HEK293T (cell line): ENCODE measurements at regions of chr13 and their contacts with region 1.

Region 1: GRCh38 chr13:50123862-50124536 is 108.8 kb downstream of the KCNRG start:
- DNase-seq: peak; percentile 82

Region 2: DNA sequence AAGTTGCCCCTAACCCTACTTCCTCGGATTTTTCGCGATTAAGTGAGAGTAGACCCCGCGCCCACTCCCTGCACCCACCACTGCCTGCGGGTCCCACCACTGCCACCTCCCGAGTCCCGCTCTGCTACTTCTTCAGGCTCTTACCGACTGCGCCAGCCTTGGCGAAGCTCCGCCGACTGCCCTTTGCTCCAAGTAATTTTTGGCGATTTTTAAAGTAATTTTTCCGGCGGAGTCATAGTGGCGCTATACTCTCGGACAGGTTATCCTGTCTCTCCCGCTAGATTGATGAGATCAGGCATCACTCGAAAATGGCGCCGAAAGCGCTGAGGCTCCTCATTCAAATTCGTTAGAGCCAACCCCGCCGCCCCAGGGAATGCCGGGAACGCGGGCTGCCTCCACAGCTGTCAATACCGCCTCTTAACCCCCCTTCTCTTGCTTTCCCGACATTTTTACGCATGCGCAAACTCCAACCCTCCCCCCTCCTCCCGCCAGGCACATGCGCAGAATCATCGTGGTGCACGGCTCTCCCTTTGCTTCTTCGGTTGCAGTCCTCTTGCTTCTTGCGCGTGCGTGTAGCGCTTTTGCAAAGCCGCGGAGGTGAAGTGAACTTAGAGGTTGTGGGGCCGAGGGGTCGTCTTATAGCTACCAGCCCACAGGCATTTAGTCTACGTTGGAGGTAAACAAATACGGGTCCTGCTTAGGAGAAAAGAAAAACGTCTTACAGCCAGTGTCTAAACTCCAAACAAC is 42.1 kb before region 1 on chr13:
- CTCF ChIA-PET with region 1: interaction called, 4 read pairs
- POLR2A ChIA-PET with region 1: interaction called, 39 read pairs
- DNase-seq: peak; percentile 91

Region 3: GRCh38 chr13:50200988-50201387 is 77.0 kb after region 1 on chr13:
- CTCF ChIA-PET with region 1: no interaction called
- POLR2A ChIA-PET with region 1: interaction called, 11 read pairs
- DNase-seq: no peak

Region 4: DNA sequence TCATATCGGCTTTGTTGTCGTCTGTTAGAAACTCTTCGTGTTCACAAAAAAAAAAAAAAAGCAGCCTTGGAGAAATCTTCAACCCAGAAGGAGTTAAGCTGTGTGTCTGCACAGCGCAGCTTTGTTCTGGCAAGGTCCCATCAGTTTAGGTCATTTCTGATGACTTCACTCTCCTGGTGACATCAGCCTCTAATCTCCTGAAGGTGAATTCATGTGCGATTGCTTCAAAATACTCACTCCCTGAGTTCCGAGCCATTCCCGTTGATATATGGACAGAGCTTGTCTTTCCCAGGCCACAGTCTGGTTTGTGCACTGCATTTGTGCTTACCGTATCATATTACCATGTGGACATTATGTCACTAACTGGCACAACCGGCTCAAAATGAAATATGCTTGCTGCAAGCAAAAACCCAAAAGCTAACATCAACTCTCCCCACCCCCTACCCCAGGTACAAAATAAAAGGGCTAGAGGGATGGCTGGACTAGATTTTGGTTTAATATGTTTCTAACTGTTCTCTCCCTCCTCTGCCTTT is 233.7 kb after region 1 on chr13:
- CTCF ChIA-PET with region 1: no interaction called
- POLR2A ChIA-PET with region 1: interaction called, 20 read pairs
- DNase-seq: peak; percentile 61